ENCODE measurements at regions of chr20 and their contacts with region 1.

Region 1: DNA sequence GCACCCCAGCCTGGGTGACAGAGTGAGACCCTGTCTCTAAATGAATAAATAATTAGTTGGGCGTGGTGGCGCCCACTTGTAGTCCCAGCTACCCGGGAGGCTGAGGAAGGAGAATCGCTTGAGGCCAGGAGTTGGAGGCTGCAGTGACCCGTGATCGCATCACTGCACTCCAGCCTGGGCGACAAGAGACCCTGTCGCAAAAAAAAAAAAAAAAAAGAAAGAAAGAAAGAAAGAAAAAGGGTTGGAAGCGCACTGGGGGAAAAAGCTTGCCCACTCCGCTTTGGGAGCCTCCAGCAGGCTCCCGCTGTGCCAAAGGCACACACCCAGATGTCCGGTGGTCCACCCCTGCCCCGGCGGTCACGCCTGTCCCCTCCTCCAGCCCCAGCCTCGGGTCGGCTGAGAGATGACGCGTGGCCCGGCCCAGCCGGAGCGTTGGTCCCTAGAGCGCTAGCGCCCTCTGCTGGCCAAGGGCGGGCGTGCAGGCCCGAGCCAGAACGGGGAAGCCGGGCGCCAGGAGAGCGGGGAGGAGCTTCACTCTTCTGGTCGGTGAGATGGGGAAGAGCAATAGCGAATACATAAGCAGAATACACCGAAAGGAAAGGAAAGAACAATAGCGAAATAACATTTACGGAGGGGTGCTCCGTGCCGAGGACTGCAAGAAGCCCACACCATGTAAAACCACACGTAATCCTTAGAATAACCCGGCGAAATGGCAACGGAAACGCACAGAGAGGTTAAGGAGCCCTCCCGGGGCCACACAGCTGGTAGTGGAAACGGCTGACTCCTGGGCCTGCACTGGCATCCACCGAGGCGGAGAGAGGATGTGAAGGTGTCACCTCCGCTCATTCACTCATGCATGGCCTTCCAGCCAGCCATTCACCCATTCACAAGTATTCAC is 41.7 kb downstream of the UBE2V1 start:
- DNase-seq: peak; percentile 97
- ATAC-seq: peak; percentile 84
- H3K4me3 Mint-ChIP-seq: peak overlapping the region; percentile 57
- H3K27ac Mint-ChIP-seq: no peak overlapping the region
- H3K4me1 Mint-ChIP-seq: peaks cover 24% of the 10 kb centered on the region
- H3K27me3 Mint-ChIP-seq: no peaks in the 10 kb centered on the region
- CTCF ChIP-seq: peak; percentile 100

Region 2: DNA sequence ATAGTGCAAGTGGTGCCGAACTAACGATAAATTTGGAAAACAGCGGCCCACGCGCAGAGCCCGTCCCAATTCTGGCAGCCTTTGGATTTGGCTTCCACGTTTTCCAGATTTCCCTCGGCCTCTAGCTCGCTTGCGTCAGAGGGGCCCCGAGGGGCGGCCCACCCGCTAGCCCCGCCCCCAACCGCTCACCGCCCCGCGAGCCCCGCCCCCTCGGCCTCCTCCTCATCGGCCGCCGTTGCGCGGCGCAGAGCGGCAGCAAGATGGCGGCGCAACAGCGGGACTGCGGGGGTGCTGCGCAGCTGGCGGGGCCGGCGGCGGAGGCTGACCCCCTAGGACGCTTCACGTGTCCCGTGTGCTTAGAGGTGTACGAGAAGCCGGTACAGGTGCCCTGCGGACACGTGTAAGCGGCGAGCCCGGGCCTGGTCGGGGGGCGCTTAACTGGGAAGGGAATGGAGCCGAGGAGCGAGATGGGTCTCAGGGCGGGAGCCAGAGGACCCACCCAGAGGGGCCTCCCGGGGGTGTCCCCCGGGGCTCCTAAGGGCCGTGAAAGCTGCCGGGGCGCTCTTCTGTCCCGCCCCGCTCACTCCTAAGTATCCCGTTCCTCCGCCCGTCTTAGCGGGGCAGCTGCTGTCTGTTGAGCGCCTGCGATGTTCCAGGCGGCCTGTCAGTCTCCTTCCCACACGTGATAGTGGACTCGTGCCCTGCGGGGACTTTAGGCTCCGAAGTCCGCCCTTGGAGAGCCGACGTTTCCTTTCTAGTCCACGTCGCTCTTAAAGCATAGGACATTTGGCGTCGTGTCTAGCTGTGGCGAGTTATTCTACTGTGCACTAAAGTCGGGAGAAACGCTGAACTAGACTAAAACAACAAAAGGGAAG is 134.8 kb before region 1 on chr20 and contains the start of gene RNF114:
- CTCF ChIA-PET with region 1: interaction called, 16 read pairs
- POLR2A ChIA-PET with region 1: no interaction called
- DNase-seq: peak; percentile 88
- ATAC-seq: peak; percentile 90
- H3K4me3 Mint-ChIP-seq: peak within 1 kb of the TSS; percentile 97
- H3K27ac Mint-ChIP-seq: peak within 1 kb of the TSS; percentile 93
- H3K4me1 Mint-ChIP-seq: peaks cover 30% of the 10 kb centered on the region
- H3K27me3 Mint-ChIP-seq: no peaks in the 10 kb centered on the region
- CTCF ChIP-seq: no peak
- total RNA-seq, gene RNF114: 86.6 to 91.6 TPM (median 88.1 TPM) in 3 replicates

Region 3: DNA sequence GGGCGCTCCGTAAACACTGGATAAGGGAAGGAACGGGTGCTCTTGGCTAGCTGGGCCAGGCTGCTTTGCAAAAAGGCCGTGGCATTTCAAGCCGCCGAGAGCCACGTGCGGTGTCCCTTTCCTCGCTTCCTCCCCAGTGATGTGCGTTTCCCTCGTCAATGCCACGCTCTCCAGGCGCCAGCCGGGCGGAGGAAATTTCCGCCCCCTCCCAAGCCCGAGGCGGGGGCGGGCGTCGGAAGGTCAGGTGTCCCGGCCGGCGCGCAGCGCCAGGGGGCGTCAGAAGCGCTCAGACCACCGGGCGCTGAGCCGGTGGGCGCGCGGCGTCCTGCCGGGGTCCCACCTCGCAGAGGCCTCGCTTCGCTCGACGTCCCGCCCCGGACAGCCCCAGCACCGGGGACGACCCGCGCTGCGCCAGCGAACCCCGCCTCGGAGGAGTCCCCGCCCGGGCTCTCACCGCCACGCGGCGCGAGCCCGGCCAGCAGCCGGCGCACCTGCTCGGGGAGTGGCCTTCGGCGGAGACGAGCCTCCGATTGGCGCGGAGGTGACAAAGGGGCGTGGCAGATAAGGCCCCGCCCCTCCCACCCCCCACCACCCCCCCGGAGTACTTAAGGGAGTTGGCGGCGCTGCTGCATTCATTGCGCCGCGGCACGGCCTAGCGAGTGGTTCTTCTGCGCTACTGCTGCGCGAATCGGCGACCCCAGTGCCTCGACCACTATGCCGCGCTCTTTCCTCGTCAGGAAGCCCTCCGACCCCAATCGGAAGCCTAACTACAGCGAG is 88.7 kb before region 1 on chr20 and contains the start of gene SNAI1:
- CTCF ChIA-PET with region 1: interaction called, 288 read pairs
- POLR2A ChIA-PET with region 1: interaction called, 11 read pairs
- DNase-seq: peak; percentile 83
- ATAC-seq: peak; percentile 52
- H3K4me3 Mint-ChIP-seq: peak within 1 kb of the TSS; percentile 84
- H3K27ac Mint-ChIP-seq: peak within 1 kb of the TSS; percentile 30
- H3K4me1 Mint-ChIP-seq: peaks cover 76% of the 10 kb centered on the region
- H3K27me3 Mint-ChIP-seq: peaks cover 34% of the 10 kb centered on the region
- CTCF ChIP-seq: 0 out of 2 replicates have a peak, but pooled peaks have one; percentile 28
- total RNA-seq, gene SNAI1: 7.0 to 8.7 TPM (median 7.9 TPM) in 3 replicates

Region 4: DNA sequence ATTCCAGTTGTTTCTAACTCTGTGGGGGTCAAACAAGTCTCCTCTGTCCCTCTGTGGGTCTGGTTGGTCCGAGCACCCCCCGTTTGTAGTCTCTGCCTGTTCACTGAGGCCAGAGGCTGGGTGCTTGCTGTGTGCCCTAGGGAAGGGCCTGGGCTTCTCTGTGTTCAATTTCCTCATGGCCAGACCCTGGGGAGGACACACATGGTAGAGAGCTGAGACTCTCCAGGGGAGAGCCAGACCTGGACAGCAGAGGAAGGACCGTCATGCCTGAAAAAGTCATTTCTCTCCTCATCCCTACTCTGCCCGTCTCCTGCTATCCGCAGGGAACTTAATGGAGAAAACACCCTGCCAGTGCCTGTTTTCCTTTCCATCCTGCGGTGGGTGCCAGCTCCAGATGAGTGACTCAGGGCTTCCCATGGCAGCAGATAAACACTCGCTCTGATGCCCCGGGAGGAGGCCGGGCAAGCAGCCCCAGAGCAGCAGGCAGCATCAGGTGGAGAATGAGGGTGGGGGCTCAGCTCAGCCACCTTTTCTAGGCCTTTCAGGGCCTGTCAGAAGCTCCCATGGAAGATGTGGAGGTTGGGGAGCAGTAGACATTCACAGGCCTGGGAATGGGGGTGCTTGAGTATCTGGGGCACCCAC is 36.6 kb before region 1 on chr20:
- CTCF ChIA-PET with region 1: interaction called, 21 read pairs
- POLR2A ChIA-PET with region 1: interaction called, 3 read pairs
- DNase-seq: no peak
- ATAC-seq: no peak
- H3K4me3 Mint-ChIP-seq: no peak overlapping the region
- H3K27ac Mint-ChIP-seq: no peak overlapping the region
- H3K4me1 Mint-ChIP-seq: peaks cover 15% of the 10 kb centered on the region
- H3K27me3 Mint-ChIP-seq: no peaks in the 10 kb centered on the region
- CTCF ChIP-seq: no peak

Region 5: DNA sequence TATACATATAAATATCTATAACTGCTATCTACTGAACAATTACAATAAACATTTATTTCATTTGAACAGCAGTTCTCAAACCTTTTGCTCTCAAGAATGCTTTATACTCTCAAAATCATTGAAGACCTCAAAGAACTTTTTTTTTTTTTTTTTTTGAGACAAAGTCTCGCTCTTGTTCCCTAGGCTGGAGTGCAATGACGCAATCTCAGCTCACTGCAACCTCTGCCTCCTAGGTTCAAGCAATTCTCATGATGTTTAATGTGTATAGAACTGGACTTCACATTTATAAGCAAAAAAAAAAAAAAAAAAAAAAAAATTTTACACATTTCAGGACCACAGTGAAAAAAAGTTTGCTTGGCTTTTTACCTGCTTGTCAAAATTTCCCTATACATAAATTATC is 30.0 kb after region 1 on chr20:
- CTCF ChIA-PET with region 1: interaction called, 14 read pairs
- POLR2A ChIA-PET with region 1: no interaction called
- DNase-seq: no peak
- ATAC-seq: no peak
- H3K4me3 Mint-ChIP-seq: no peak overlapping the region
- H3K27ac Mint-ChIP-seq: peak overlapping the region; percentile 74; the same call in 1 of the 2 replicates
- H3K4me1 Mint-ChIP-seq: peaks cover 43% of the 10 kb centered on the region
- H3K27me3 Mint-ChIP-seq: no peaks in the 10 kb centered on the region
- CTCF ChIP-seq: no peak

Region 6: GRCh38 chr20:50153485-50154377 is 82.5 kb after region 1 on chr20 and contains the start of gene PEDS1:
- CTCF ChIA-PET with region 1: interaction called, 11 read pairs
- POLR2A ChIA-PET with region 1: interaction called, 3 read pairs
- DNase-seq: peak; percentile 88
- ATAC-seq: peak; percentile 91
- H3K4me3 Mint-ChIP-seq: peak within 1 kb of the TSS; percentile 83
- H3K27ac Mint-ChIP-seq: peak within 1 kb of the TSS; percentile 89
- H3K4me1 Mint-ChIP-seq: peaks cover 41% of the 10 kb centered on the region
- H3K27me3 Mint-ChIP-seq: peaks cover 15% of the 10 kb centered on the region
- CTCF ChIP-seq: no peak
- total RNA-seq, gene PEDS1: 35.0 to 36.7 TPM (median 35.6 TPM) in 3 replicates

Region 7: DNA sequence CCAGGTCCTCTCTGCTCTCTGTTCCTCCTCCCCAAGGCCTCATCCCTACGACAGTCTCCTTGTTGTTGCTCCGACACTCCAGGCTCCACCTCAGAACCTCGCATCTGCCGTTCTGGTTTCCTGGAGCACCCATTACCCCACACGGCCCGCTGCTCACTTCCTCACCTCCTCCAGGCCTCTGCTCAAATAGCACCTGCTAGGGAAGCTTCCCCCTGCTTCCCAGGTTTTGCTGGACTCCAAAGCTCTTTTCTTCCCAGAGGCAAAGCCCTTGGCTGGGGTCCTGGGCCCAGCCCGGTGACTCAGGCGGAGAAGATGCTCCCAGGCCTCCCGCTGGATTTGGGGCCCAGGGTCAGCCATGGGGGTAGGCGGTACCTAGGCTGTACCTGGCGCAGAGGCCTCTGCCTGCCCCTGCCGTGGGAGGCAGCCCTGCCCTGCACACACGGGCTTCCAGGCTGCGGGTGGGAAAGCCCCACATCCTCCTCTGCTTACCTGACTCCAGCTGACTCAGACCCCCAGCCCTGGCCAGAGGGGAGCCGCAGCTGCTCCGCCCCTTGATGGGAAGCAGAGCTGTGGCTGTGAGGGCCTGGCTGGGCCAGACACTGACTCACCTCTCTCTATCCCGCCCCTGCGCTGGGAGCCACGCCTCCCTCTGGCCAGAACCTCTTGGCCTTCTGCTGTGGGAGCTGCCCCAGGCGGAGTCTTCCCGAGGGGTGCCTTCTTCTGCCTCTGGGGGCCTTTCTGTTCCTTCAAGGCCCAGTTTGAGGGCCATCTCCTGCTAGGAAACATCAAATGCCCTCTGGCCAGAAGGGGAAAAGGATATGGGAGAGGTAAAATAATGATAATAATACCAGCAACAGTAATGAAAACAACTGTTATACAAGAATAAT is 249.9 kb after region 1 on chr20:
- CTCF ChIA-PET with region 1: no interaction called
- POLR2A ChIA-PET with region 1: no interaction called
- DNase-seq: peak; percentile 90
- ATAC-seq: peak; percentile 99
- H3K4me3 Mint-ChIP-seq: no peak overlapping the region
- H3K27ac Mint-ChIP-seq: peak overlapping the region; percentile 51
- H3K4me1 Mint-ChIP-seq: peaks cover 14% of the 10 kb centered on the region
- H3K27me3 Mint-ChIP-seq: no peaks in the 10 kb centered on the region; the same call in 1 of the 2 replicates
- CTCF ChIP-seq: no peak